A549 (cell line): ENCODE measurements at regions of chr13 and their contacts with region 1.

Region 1: GRCh38 chr13:75482070-75482819 is at the start of gene TBC1D4:
- DNase-seq: peak; percentile 50 to 90
- ATAC-seq: peak; percentile 86 to 88
- H3K4me3 ChIP-seq: peak within 1 kb of the TSS; percentile 92
- H3K27ac ChIP-seq: peak within 1 kb of the TSS; percentile 74 to 92
- H3K4me1 ChIP-seq: peaks cover 41% of the 10 kb centered on the region
- CTCF ChIP-seq: peak; percentile 78
- EP300 ChIP-seq: no peak
- POLR2A ChIP-seq: peak; percentile 27; the same call in 1 of the 2 replicates
- RAD21 ChIP-seq: peak; percentile 56 to 75
- polyA plus RNA-seq, gene TBC1D4: 12.5 and 17.6 TPM in 2 replicates

Region 2: GRCh38 chr13:75366380-75367280 is 115.6 kb before region 1 on chr13:
- CTCF ChIA-PET with region 1: interaction called, 47 read pairs
- POLR2A ChIA-PET with region 1: no interaction called
- DNase-seq: no peak
- ATAC-seq: no peak
- H3K4me3 ChIP-seq: no peak overlapping the region
- H3K27ac ChIP-seq: no peak overlapping the region
- H3K4me1 ChIP-seq: peaks cover 12% of the 10 kb centered on the region
- CTCF ChIP-seq: no peak
- EP300 ChIP-seq: no peak
- POLR2A ChIP-seq: no peak
- RAD21 ChIP-seq: no peak

Region 3: GRCh38 chr13:75372517-75372916 is 109.7 kb before region 1 on chr13:
- CTCF ChIA-PET with region 1: interaction called, 47 read pairs
- POLR2A ChIA-PET with region 1: no interaction called
- DNase-seq: peak; percentile 13 to 41
- ATAC-seq: peak; percentile 62 to 78; a peak in 4 of 6 replicates
- H3K4me3 ChIP-seq: no peak overlapping the region
- H3K27ac ChIP-seq: no peak overlapping the region
- H3K4me1 ChIP-seq: no peaks in the 10 kb centered on the region
- CTCF ChIP-seq: peak; percentile 51
- EP300 ChIP-seq: no peak
- POLR2A ChIP-seq: no peak
- RAD21 ChIP-seq: peak; percentile 39 to 58

Region 4: DNA sequence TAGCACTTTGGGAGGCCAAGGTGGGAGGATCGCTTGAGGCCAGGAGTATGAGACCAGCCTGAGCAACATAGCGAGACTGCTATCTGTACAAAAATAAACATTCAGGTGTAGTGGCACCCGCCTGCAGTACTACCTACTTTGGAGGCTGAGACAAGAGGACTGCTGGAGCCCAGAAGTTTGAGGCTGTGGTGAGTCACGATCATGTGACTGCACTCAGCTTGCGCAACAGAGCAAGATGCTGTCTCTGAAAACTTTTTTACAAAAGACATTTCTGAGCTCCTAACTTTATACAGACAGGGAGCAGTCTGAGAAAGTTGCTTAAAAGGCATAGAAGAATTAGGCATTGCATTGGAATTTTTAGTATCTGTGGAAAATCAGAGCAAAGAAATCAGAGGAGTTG is 10.1 kb after region 1 on chr13:
- CTCF ChIA-PET with region 1: interaction called, 11 read pairs
- POLR2A ChIA-PET with region 1: no interaction called
- DNase-seq: no peak
- ATAC-seq: no peak
- H3K4me3 ChIP-seq: no peak overlapping the region
- H3K27ac ChIP-seq: no peak overlapping the region
- H3K4me1 ChIP-seq: peaks cover 12% of the 10 kb centered on the region
- CTCF ChIP-seq: no peak
- EP300 ChIP-seq: no peak
- POLR2A ChIP-seq: no peak
- RAD21 ChIP-seq: no peak

Region 5: DNA sequence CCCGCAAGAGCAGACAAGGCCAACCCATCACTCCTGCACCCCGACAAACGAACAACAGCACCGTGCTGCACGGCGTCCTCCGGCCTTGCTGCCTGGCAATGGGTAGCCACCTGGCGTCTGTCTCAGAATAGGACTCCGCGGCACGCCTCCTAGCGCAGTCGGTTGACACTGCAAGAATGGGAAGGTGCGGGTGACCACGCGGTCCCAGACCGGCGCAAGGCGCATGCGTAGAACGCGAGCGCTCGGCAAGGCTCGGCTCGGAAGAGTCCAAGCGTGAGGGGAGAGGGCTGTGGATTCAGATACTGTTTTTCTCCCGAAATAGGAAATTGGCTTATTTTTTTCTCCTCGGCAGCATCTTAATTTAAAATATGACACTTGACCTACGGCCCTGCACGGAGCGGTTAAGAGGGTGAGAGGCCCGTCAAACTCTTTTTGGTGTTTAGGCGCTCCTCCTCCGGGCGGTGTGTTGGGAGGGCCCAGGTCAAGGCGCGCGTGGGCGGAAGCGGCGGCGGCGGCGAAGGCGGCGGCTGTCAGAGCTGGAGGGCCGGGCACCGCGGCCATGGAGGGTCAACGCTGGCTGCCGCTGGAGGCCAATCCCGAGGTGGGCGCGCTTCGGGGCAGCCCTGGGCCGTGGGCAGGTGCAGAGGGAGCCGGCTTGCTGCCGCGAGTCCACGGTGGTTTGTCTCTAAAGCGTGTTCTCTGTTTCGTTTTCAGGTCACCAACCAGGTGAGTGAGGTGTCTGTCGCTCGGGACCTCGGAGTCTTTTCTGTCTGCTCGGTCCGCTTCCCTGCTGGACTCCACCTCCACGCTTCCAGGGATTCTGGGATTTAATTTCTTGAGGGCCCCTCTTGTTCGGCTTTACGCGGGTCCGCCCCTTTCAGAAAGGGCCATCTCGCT is 67.3 kb after region 1 on chr13 and contains the start of gene UCHL3:
- CTCF ChIA-PET with region 1: interaction called, 15 read pairs
- POLR2A ChIA-PET with region 1: interaction called, 4 read pairs
- DNase-seq: peak; percentile 90 to 95
- ATAC-seq: peak; percentile 97 to 98
- H3K4me3 ChIP-seq: peak within 1 kb of the TSS; percentile 86
- H3K27ac ChIP-seq: peak within 1 kb of the TSS; percentile 92
- H3K4me1 ChIP-seq: peaks cover 20% of the 10 kb centered on the region; the same call in 2 of the 3 replicates
- CTCF ChIP-seq: peak; percentile 56
- EP300 ChIP-seq: no peak
- POLR2A ChIP-seq: peak; percentile 69
- RAD21 ChIP-seq: peak; percentile 55 to 56
- polyA plus RNA-seq, gene UCHL3: 52.6 and 60.7 TPM in 2 replicates